AG04449 (cell line): ENCODE measurements at regions of chr12 and their contacts with region 1.

Region 1: GRCh38 chr12:6335451-6336078 is 6.3 kb downstream of the TNFRSF1A start:
- DNase-seq: no peak
- H3K4me3 ChIP-seq: peak overlapping the region; percentile 54
- CTCF ChIP-seq: peak; percentile 86

Region 2: DNA sequence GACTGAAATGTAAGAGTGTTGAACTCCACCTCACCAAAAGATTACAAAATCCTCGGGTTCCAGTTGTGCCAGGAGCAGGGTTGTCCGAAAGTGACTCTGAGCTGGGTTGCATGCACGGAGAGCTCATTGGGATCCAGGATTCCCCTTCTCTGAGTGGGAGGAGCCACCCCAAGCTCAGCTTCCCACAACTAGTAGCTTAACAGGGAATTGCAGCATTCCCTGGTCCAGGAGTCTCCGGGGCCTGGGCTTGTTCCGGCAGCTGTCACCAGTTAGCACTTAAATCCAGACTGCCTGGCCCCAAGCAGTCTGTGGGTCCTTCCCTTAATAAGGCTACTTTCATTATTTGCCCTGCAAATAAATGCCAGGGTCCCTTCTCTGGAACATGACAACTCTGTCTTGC is 85.2 kb before region 1 on chr12:
- CTCF ChIA-PET with region 1: no interaction called
- POLR2A ChIA-PET with region 1: no interaction called
- DNase-seq: no peak
- H3K4me3 ChIP-seq: no peak overlapping the region
- CTCF ChIP-seq: no peak

Region 3: DNA sequence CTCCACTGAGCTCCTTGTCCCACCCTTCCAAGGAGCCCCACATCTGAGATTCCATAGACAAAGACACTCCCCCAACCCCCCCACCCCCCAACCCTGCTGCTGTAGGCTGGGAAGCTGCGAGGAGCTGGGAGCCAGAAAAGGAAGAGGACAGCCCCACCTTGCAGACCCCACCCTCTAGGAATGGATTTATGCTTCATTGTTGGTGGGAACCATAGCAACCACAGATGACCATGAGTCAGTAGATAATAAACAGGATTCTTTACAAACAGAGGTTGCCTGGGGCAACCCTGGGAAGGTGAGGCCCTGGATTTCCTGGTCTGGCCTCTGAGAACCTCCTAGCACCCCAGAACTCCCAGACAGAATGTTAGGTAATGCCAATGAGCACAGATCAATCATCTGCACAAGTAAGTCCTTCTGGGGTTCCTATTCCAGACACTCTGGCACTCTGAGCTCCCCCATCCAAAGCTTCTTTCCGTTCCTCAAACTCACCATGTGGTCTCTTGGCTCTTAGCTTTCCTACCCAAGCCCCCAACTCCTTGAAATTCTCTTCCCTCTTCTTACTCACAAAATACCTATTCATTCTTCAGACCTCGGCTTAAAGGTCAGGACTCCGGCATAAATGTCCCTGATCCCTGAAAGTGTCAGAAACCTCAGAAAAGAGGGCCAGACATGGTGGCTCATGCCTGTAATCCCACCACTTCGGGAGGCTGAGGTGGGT is 40.3 kb before region 1 on chr12:
- CTCF ChIA-PET with region 1: no interaction called
- POLR2A ChIA-PET with region 1: no interaction called
- DNase-seq: no peak
- H3K4me3 ChIP-seq: no peak overlapping the region
- CTCF ChIP-seq: no peak

Region 4: GRCh38 chr12:6323340-6323994 is 12.1 kb before region 1 on chr12:
- CTCF ChIA-PET with region 1: interaction called, 17 read pairs
- POLR2A ChIA-PET with region 1: interaction called, 12 read pairs
- DNase-seq: peak; percentile 76
- H3K4me3 ChIP-seq: 0 out of 2 replicates have a peak overlapping the region, but pooled peaks have one; percentile 8
- CTCF ChIP-seq: peak; percentile 46

Region 5: GRCh38 chr12:6383572-6384498 is 48.3 kb after region 1 on chr12 and contains the start of gene LTBR:
- CTCF ChIA-PET with region 1: no interaction called
- POLR2A ChIA-PET with region 1: interaction called, 13 read pairs
- DNase-seq: peak; percentile 54
- H3K4me3 ChIP-seq: peak within 1 kb of the TSS; percentile 68
- CTCF ChIP-seq: peak; percentile 26

Region 6: DNA sequence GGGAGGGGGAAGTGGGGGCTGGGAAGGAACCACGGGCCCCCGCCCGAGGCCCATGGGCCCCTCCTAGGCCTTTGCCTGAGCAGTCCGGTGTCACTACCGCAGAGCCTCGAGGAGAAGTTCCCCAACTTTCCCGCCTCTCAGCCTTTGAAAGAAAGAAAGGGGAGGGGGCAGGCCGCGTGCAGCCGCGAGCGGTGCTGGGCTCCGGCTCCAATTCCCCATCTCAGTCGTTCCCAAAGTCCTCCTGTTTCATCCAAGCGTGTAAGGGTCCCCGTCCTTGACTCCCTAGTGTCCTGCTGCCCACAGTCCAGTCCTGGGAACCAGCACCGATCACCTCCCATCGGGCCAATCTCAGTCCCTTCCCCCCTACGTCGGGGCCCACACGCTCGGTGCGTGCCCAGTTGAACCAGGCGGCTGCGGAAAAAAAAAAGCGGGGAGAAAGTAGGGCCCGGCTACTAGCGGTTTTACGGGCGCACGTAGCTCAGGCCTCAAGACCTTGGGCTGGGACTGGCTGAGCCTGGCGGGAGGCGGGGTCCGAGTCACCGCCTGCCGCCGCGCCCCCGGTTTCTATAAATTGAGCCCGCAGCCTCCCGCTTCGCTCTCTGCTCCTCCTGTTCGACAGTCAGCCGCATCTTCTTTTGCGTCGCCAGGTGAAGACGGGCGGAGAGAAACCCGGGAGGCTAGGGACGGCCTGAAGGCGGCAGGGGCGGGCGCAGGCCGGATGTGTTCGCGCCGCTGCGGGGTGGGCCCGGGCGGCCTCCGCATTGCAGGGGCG is 198.5 kb after region 1 on chr12 and contains the start of gene GAPDH:
- CTCF ChIA-PET with region 1: interaction called, 3 read pairs
- POLR2A ChIA-PET with region 1: interaction called, 16 read pairs
- DNase-seq: peak; percentile 86
- H3K4me3 ChIP-seq: peak within 1 kb of the TSS; percentile 97
- CTCF ChIP-seq: no peak